Right lobe of liver (tissue), 6 donors: ENCODE measurements at regions of chr17 and their contacts with region 1.

Region 1: GRCh38 chr17:38415250-38416194 is 12.7 kb upstream of the ARHGAP23 start:
- DNase-seq: no peak
- ATAC-seq: peak; percentile 14 to 57 (median 32)
- H3K4me3 ChIP-seq: no peak overlapping the region
- H3K27ac ChIP-seq: no peak overlapping the region
- H3K4me1 ChIP-seq: peaks cover 0 to 9% (median 0%) of the 10 kb centered on the region in 4 donors
- H3K27me3 ChIP-seq: peaks cover 0 to 5% of the 10 kb centered on the region in 2 donors
- CTCF ChIP-seq: no peak
- POLR2A ChIP-seq: no peak

Region 2: GRCh38 chr17:38341035-38341721 is 74.3 kb before region 1 on chr17:
- intact Hi-C with region 1: loop called (anchors 5 kb)
- DNase-seq: peak; percentile 83 to 85 (median 83)
- ATAC-seq: peak; percentile 77 to 90 (median 84)
- H3K4me3 ChIP-seq: no peak overlapping the region
- H3K27ac ChIP-seq: no peak overlapping the region
- H3K4me1 ChIP-seq: no peaks in the 10 kb centered on the region
- H3K27me3 ChIP-seq: no peaks in the 10 kb centered on the region
- CTCF ChIP-seq: no peak
- POLR2A ChIP-seq: no peak

Region 3: DNA sequence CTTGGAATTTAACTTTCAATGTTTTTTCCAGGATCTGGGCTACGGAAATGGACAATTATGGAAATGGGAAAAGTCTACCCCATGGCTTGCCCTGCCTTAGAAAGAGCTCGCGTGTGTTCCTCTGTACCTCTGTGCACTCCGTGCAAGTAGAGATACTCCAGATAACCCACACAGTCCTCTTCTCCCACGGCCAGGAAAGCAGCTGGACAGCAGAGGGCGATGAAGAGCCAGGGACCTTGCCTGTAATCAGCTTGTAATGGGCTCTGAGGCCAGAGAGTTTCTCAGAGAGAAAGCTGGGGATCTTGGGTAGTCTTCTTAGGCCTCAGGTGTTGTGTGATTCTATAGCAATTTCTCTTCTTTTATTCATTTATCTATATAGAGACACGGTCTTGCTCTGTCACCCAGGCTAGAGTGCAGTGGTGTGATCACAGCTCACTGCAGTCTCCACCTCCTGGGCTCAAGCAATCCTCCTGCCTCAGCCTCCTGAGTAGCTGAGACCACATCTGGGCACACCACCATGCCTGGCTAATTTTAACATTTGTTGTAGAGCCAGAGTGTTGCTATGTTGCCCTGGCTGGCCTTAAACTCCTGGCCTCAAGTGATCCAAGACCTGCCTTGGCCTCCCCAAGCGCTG is 66.3 kb before region 1 on chr17:
- intact Hi-C with region 1: loop called (anchors 5 kb)
- DNase-seq: peak; percentile 80 to 84 (median 81)
- ATAC-seq: peak; percentile 70 to 77 (median 72)
- H3K4me3 ChIP-seq: no peak overlapping the region
- H3K27ac ChIP-seq: no peak overlapping the region
- H3K4me1 ChIP-seq: peaks cover 0 to 8% (median 3%) of the 10 kb centered on the region in 4 donors
- H3K27me3 ChIP-seq: no peaks in the 10 kb centered on the region
- CTCF ChIP-seq: peak; percentile 89 to 95 (median 92)
- POLR2A ChIP-seq: no peak